Activated T-helper 2 cell treated with anti-CD3 and anti-CD28 coated beads, Interferon-gamma antibody, Interleukin-2, Interleukin-4, amounts not matched to agents 10 μg/mL and 5 μg/mL and 100 μg/mL, durations not matched to agents 14 hours and 24 hours and 36 hours (primary cell): ENCODE measurements at regions of chr20 and their contacts with region 1.

Region 1: DNA sequence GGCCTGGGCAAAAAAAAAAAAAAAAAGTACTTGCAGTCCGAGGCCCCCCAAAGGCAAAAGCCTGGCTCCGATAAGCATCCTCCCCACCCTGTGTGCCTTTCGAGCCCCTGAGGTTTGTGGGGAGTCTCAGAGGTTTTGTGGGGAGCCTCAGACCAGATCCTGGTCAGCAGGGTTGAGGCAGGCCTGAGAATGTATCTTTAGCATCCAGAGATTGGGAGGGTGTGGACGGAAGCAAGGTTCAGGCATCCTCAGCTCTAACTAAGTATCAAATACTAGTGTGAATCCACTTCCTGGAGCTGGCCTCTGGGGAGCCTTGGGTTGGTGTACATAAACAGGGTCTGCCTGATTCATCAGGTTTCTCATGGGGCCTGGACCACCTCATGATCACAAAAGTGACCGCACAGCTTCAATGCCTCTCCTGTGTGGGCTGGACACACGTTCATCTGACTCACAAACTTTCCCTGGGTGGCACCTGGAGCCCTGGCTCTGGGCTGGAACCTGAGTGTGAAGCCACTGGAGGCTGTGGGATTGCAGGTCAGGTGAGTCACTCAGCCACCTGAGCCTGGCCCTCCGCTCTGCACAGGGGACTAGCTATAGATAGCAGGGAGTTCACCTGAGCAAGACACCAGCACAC is 24.4 kb downstream of the PCMTD2 start:
- DNase-seq: no peak
- H3K4me3 Mint-ChIP-seq: no peak overlapping the region
- H3K27ac Mint-ChIP-seq: no peak overlapping the region
- H3K4me1 Mint-ChIP-seq: peaks cover 4% of the 10 kb centered on the region
- H3K27me3 Mint-ChIP-seq: peaks cover 3% of the 10 kb centered on the region

Region 2: DNA sequence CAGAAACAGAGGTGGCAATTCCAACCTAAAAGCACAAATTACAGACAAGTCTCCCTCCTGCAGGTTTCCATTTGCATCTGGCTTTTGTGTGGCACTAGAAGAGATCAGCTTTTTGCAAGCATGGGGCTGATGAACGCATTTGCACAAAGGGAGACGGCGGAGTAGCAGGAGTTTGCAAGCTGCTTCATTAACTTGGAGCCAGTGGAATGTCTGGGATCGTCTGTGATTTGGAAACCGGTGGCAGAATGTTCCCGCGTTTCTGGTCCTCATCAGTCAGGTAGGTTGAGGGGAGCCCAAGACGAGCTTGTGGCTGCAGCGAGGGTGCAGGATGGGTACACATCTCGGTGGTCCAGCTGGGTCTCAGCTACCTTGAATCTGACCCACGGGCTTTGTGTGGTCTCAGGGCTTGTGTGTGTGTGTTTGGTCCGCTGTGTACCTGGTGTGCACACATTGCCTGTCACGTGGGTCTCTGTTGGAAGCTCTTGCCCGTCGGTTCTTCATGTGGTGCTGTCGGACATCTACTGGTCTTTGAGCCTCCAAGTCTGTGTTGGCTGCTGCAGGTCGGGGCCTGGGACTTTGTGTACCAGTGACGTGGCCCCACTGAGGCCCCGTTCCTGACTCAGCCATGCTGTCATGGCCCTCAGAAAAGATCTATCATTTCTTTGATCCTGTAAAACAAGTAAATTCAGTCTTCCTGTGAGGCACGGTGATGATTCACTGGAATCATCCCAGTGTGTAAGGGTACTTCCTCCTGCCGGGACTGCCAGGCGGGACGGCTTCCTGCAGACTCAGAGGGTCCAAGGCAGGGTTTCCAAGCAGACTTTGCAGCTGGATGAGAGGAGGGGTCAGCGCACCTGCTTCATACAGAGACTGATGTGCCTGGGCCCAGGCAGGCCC is 128.1 kb before region 1 on chr20:
- intact Hi-C with region 1: no loop called
- DNase-seq: no peak
- H3K4me3 Mint-ChIP-seq: no peak overlapping the region
- H3K27ac Mint-ChIP-seq: no peak overlapping the region
- H3K4me1 Mint-ChIP-seq: no peaks in the 10 kb centered on the region
- H3K27me3 Mint-ChIP-seq: no peaks in the 10 kb centered on the region

Region 3: GRCh38 chr20:64247970-64248841 is 31.7 kb before region 1 on chr20:
- intact Hi-C with region 1: no loop called
- DNase-seq: no peak
- H3K4me3 Mint-ChIP-seq: no peak overlapping the region
- H3K27ac Mint-ChIP-seq: no peak overlapping the region
- H3K4me1 Mint-ChIP-seq: no peaks in the 10 kb centered on the region
- H3K27me3 Mint-ChIP-seq: peaks cover 24% of the 10 kb centered on the region

Region 4: GRCh38 chr20:64260239-64260638 is 19.7 kb before region 1 on chr20:
- intact Hi-C with region 1: loop called (anchors 1 kb)
- DNase-seq: no peak
- H3K4me3 Mint-ChIP-seq: no peak overlapping the region
- H3K27ac Mint-ChIP-seq: no peak overlapping the region
- H3K4me1 Mint-ChIP-seq: peaks cover 39% of the 10 kb centered on the region
- H3K27me3 Mint-ChIP-seq: no peaks in the 10 kb centered on the region